GM12878 (cell line): ENCODE measurements at regions of chr17 and their contacts with region 1.

Region 1: GRCh38 chr17:21674242-21674731 is 18.0 kb upstream of the KCNJ18 start:
- DNase-seq: no peak
- ATAC-seq: no peak
- H3K4me3 ChIP-seq: no peak overlapping the region
- H3K27ac ChIP-seq: no peak overlapping the region
- H3K4me1 ChIP-seq: no peaks in the 10 kb centered on the region
- H3K27me3 ChIP-seq: no peaks in the 10 kb centered on the region
- CTCF ChIP-seq: no peak
- EP300 ChIP-seq: no peak
- POLR2A ChIP-seq: no peak
- RAD21 ChIP-seq: no peak

Region 2: GRCh38 chr17:21756856-21757619 is 82.8 kb after region 1 on chr17:
- CTCF ChIA-PET with region 1: no interaction called
- POLR2A ChIA-PET with region 1: no interaction called
- RAD21 ChIA-PET with region 1: no interaction called
- SMC1A ChIA-PET with region 1: no interaction called
- in situ Hi-C with region 1: loop called (anchors 25 kb)
- intact Hi-C with region 1: no loop called
- DNase-seq: no peak
- ATAC-seq: no peak
- H3K4me3 ChIP-seq: no peak overlapping the region
- H3K27ac ChIP-seq: no peak overlapping the region
- H3K4me1 ChIP-seq: no peaks in the 10 kb centered on the region
- H3K27me3 ChIP-seq: no peaks in the 10 kb centered on the region
- CTCF ChIP-seq: no peak
- EP300 ChIP-seq: no peak
- POLR2A ChIP-seq: no peak
- RAD21 ChIP-seq: no peak

Region 3: DNA sequence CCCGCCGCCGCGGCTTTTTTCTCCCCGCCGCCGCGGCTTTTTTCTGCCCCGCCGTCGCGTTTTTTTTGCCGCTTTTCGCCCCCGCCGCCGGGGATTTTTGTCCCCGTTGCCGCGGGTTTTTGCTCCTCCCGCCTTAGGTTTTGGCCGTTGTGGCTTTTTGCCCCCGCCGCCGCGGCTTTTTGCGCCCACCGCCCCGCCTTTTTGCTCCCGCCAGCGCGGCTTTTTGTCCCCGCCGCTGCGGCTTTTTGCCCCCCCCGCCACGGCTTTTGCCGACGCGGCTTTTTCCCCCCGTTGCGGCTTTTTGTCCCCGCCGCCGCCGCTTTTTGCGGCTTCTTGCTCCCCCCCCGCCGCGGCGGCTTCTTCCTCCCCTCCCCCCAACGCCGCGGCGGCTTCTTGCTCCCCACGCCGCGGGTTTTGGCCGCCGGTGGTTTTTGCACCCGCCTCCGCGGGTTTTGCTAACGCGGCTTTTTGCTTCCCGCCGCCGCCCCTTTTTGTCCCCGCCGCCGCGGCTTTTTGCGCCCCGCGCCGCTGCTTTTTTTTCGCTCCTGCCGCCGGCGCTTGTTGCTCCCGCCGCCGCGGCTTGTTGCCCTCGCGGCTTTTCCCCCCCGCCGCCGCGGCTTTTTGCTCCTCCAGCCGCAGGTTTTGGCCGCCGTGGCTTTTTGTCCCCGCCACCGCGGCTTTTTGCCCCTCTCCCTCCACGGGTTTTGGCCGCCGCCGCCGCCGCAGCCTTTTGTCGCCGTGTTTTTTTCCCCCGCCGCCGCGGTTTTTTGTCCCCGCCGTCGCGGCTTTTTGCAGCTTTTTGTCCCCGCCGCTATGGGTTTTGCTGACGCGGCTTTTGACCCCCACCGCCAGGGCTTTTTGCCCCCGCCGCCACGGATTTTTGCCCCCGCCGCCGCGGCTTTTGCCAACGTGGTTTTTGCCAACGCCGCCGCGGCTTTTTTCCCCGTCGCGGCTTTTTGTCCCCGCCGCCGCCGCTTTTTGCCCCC is 168.3 kb after region 1 on chr17:
- CTCF ChIA-PET with region 1: no interaction called
- POLR2A ChIA-PET with region 1: no interaction called
- RAD21 ChIA-PET with region 1: no interaction called
- SMC1A ChIA-PET with region 1: no interaction called
- in situ Hi-C with region 1: loop called (anchors 25 kb)
- intact Hi-C with region 1: no loop called
- DNase-seq: no peak
- ATAC-seq: no peak
- H3K4me3 ChIP-seq: no peak overlapping the region
- H3K27ac ChIP-seq: no peak overlapping the region
- H3K4me1 ChIP-seq: no peaks in the 10 kb centered on the region
- H3K27me3 ChIP-seq: no peaks in the 10 kb centered on the region
- CTCF ChIP-seq: no peak
- EP300 ChIP-seq: no peak
- POLR2A ChIP-seq: no peak
- RAD21 ChIP-seq: no peak

Region 4: GRCh38 chr17:22202702-22203101 is 528.4 kb after region 1 on chr17:
- CTCF ChIA-PET with region 1: no interaction called
- POLR2A ChIA-PET with region 1: no interaction called
- RAD21 ChIA-PET with region 1: no interaction called
- SMC1A ChIA-PET with region 1: no interaction called
- in situ Hi-C with region 1: loop called (anchors 25 kb)
- intact Hi-C with region 1: no loop called
- DNase-seq: no peak
- ATAC-seq: no peak
- H3K4me3 ChIP-seq: no peak overlapping the region
- H3K27ac ChIP-seq: no peak overlapping the region
- H3K4me1 ChIP-seq: no peaks in the 10 kb centered on the region
- H3K27me3 ChIP-seq: no peaks in the 10 kb centered on the region
- CTCF ChIP-seq: no peak
- EP300 ChIP-seq: no peak
- POLR2A ChIP-seq: no peak
- RAD21 ChIP-seq: no peak

Region 5: DNA sequence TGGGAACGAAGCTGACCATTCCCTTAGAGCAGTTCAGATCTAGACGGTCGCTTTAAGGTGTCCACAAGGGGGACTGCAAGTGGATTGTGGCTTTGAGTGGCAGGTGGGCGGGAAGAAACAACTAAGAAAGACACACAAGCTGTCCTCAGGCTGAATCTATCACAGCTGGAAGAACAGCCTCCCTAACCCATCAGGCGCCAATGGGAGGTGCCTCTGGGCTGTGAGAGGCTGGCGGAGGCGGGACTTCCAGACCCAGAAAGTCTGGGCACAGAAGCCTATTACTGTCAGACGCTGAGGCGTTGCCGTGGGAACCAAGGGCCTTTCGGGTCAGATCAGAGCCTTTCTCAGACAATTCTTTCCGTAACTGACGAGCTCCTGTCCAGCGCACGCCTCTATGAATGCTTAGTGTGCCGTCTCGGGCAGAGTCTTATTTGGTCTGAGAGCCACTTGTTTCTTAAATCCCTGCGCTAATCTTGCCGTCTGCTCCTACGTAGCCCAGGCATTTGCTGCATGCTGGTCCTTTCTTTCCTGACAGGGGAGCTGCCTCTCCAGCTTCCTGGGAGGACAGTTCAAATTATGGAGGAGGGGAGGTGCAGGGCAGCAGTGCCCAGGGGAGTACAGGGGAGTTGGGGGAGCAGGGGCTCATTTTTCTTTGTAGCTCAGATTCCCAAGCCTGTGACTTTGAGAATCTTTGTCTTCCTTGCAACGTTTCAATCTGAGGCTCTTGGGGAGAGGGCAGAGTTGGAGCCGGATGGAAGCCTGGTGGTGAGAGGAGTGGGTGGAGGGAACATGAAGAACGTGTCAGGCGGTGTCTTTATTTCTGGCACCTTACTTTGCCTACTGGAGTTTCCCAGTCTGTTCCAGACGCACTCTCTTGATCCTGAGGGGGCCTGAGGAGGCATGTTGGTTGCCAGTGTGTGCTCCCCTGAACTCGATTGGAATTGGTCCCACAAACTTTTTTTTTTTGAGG is 636.7 kb after region 1 on chr17:
- CTCF ChIA-PET with region 1: no interaction called
- POLR2A ChIA-PET with region 1: no interaction called
- RAD21 ChIA-PET with region 1: no interaction called
- SMC1A ChIA-PET with region 1: no interaction called
- in situ Hi-C with region 1: loop called (anchors 25 kb)
- intact Hi-C with region 1: no loop called
- DNase-seq: no peak
- ATAC-seq: no peak
- H3K4me3 ChIP-seq: no peak overlapping the region
- H3K27ac ChIP-seq: no peak overlapping the region
- H3K4me1 ChIP-seq: no peaks in the 10 kb centered on the region
- H3K27me3 ChIP-seq: no peaks in the 10 kb centered on the region
- CTCF ChIP-seq: no peak
- EP300 ChIP-seq: no peak
- POLR2A ChIP-seq: no peak
- RAD21 ChIP-seq: no peak

Region 6: DNA sequence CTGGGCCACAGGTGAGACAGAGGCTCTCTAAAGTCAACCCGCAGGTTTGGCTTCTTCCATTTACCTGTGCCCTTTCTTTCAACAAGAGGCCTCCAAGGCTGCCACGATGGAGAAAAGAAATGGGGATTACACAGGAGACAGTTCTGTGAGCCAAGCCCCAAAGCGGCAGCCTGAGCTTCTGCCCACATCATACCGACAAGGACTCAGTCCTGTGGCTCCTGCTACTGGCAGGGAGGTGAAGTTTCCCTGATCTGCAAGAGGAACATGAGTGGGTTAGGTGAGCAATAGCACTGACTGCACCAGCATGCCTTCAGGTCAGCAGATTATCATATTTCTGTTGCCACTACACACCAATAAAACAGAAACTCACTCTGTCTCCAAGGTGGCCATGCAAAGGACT is 818.0 kb after region 1 on chr17:
- CTCF ChIA-PET with region 1: no interaction called
- POLR2A ChIA-PET with region 1: no interaction called
- RAD21 ChIA-PET with region 1: no interaction called
- SMC1A ChIA-PET with region 1: no interaction called
- in situ Hi-C with region 1: loop called (anchors 25 kb)
- intact Hi-C with region 1: no loop called
- DNase-seq: no peak
- ATAC-seq: no peak
- H3K4me3 ChIP-seq: no peak overlapping the region
- H3K27ac ChIP-seq: no peak overlapping the region
- H3K4me1 ChIP-seq: no peaks in the 10 kb centered on the region
- H3K27me3 ChIP-seq: no peaks in the 10 kb centered on the region
- CTCF ChIP-seq: no peak
- EP300 ChIP-seq: no peak
- POLR2A ChIP-seq: no peak
- RAD21 ChIP-seq: no peak

Region 7: GRCh38 chr17:22600644-22601303 is 926.5 kb after region 1 on chr17:
- CTCF ChIA-PET with region 1: no interaction called
- POLR2A ChIA-PET with region 1: no interaction called
- RAD21 ChIA-PET with region 1: no interaction called
- SMC1A ChIA-PET with region 1: no interaction called
- in situ Hi-C with region 1: loop called (anchors 25 kb)
- intact Hi-C with region 1: no loop called
- DNase-seq: no peak
- ATAC-seq: no peak
- H3K4me3 ChIP-seq: no peak overlapping the region
- H3K27ac ChIP-seq: no peak overlapping the region
- H3K4me1 ChIP-seq: no peaks in the 10 kb centered on the region
- H3K27me3 ChIP-seq: no peaks in the 10 kb centered on the region
- CTCF ChIP-seq: peak in 1 of 3 experiments; percentile 3; a peak in 1 of 6 replicates
- EP300 ChIP-seq: no peak
- POLR2A ChIP-seq: no peak
- RAD21 ChIP-seq: no peak